ENCODE measurements at regions of chr6 and their contacts with region 1.

Region 1: DNA sequence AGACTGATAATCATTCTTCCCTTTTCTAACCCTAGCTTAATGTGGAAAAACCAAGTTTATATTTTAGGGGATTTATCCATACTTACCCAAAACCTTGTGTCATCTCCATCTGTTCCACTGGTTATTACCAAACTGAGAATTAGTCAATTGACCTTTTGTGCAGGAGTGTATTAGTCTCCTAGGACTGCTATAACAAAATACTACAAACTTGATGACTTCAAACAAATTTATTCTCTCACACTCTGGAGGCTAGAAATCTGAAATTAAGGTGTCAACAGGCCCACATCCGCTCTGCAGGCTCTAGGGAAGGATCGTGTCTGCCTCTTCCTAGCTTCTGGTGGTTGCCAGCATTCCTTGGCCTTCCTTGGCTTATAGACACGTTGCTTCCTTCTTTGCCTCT is 12.7 kb upstream of the GMDS start:
- DNase-seq: no peak
- H3K4me3 ChIP-seq: no peak overlapping the region
- H3K27ac ChIP-seq: no peak overlapping the region
- H3K4me1 ChIP-seq: no peaks in the 10 kb centered on the region
- H3K27me3 ChIP-seq: no peaks in the 10 kb centered on the region
- CTCF ChIP-seq: no peak
- EP300 ChIP-seq: no peak
- POLR2A ChIP-seq: no peak

Region 2: DNA sequence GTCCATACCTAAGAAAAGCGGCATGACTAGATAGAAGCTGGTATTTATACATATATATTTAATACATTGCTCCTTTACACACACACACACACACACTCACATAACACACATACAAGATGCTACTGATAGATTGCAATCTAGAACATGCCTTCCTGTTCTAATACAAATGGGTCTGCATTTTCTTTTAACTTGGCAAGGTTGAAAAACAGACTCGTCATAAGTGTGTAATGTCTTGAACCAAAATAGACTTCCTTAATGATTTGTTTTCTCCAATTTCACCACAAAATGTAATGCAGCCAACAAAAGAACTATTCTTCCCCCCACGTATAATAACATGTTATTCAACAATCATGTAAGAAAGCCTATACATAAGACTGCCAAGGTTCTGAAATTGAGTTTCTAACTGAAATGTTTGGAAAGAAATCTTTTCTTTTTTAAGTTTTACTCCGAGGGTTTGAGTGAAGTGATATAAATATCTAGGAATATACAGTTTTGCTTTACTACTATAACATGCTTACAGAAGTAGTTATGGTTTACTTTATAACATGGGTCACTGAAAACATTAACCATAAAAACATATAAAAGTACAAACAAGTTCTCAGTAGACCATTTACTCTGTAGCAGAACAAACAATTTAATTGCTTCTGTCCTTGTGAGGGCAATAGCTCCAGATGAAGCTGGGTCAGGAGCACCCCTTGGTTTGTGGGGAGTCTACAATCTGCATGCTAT is 440.9 kb before region 1 on chr6:
- intact Hi-C with region 1: no loop called
- DNase-seq: no peak
- H3K4me3 ChIP-seq: no peak overlapping the region
- H3K27ac ChIP-seq: no peak overlapping the region
- H3K4me1 ChIP-seq: no peaks in the 10 kb centered on the region
- H3K27me3 ChIP-seq: no peaks in the 10 kb centered on the region
- CTCF ChIP-seq: no peak
- EP300 ChIP-seq: no peak
- POLR2A ChIP-seq: no peak

Region 3: DNA sequence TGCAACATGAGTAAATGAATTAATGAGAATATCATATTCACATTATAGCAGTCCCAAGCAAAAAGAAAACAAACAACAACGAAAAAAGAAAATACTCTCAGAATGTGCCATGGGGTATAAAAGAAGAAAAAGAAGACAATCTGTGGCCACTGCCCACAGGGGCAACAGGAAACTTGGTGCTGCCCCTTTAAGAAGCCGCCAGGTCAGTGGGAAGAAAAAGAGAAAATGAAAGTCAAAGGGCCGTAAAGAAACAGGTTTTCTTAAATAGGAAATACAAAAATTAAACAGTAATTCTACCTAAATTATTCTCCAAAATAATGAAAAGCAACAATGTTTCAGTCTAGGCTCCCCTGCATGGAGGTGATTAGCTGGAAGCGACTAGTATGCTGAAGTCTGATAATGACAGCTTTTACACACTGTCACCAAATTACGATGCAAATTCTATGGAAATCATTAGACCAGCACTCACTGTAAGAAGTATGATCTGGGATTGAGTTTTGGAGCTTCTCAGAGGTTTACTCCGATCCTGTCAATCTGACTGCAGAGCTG is 36.3 kb before region 1 on chr6:
- intact Hi-C with region 1: loop called in 1 of 4 experiments (anchors 1 kb)
- DNase-seq: no peak
- H3K4me3 ChIP-seq: peak overlapping the region; percentile 25
- H3K27ac ChIP-seq: no peak overlapping the region
- H3K4me1 ChIP-seq: peaks cover 5% of the 10 kb centered on the region
- H3K27me3 ChIP-seq: no peaks in the 10 kb centered on the region
- CTCF ChIP-seq: no peak
- EP300 ChIP-seq: no peak
- POLR2A ChIP-seq: no peak

Region 4: GRCh38 chr6:2547355-2547754 is 289.2 kb after region 1 on chr6:
- intact Hi-C with region 1: no loop called
- DNase-seq: no peak
- H3K4me3 ChIP-seq: no peak overlapping the region
- H3K27ac ChIP-seq: no peak overlapping the region
- H3K4me1 ChIP-seq: no peaks in the 10 kb centered on the region
- H3K27me3 ChIP-seq: no peaks in the 10 kb centered on the region
- CTCF ChIP-seq: no peak
- EP300 ChIP-seq: no peak
- POLR2A ChIP-seq: no peak